Panc1 (cell line): ENCODE measurements at regions of chr2 and their contacts with region 1.

Region 1: DNA sequence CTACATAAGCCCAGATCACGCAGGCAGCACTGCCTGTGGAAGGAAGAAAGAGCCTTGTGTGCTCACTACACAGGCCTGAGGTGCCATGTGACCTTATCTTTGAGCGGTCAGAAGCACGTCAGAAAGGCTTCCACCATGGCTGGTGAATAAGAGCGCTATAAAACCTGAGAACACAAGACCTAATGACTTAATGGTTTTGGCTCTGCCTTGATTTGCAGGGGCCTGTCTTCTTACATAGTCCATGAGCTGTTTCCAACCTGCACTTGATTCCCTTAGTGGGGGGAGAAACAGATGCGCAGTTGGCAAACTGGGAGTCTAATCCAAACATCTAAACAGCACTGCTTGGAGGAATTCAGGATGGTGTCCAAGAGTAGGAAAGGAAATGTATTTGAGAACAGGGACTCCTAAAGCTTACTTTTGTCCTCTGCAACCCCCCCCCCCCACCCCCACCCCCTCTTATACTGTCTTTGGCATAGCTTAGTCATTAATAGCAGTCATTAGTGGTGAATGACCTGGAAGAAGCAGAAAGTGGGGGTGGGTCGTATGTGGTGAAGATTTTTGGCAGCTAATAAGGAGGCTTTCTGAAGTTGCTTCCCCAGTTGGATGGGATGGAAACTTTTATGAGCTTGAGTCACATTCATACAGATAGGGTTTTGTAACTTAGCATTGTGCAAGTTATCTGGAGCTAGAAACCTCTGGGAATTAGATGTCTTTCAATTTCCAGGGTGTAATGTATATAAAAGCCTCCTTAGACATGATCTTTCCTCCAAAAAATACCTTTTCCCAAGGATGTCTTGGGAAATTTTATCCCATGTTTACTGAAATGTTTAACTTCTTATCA is 454.1 kb downstream of the MEIS1 start:
- DNase-seq: no peak
- ATAC-seq: no peak
- H3K4me3 ChIP-seq: no peak overlapping the region
- H3K27ac ChIP-seq: no peak overlapping the region
- H3K4me1 ChIP-seq: no peaks in the 10 kb centered on the region
- H3K27me3 ChIP-seq: no peaks in the 10 kb centered on the region
- CTCF ChIP-seq: no peak

Region 2: DNA sequence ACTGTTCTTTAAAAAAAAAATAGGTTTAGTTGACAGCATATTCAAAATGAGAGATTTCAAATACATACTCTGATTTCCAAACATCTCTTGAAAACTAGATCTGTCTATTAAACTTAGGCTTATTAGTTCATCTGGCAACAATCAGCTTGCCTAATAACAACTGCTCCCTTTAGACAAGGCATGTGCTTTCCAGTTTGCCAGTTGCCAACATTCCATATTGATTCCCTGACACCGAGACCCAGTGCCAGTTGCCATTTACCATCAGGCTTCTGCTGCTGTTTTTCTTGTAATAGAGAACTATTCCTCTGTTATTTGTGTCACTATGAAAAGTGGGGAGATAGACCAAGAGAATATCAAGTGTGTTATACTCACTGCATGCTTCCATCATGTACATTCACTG is 917.8 kb after region 1 on chr2:
- CTCF ChIA-PET with region 1: interaction called, 10 read pairs
- POLR2A ChIA-PET with region 1: no interaction called
- in situ Hi-C with region 1: no loop called
- intact Hi-C with region 1: no loop called
- DNase-seq: no peak
- ATAC-seq: no peak
- H3K4me3 ChIP-seq: no peak overlapping the region
- H3K27ac ChIP-seq: no peak overlapping the region
- H3K4me1 ChIP-seq: no peaks in the 10 kb centered on the region
- H3K27me3 ChIP-seq: no peaks in the 10 kb centered on the region
- CTCF ChIP-seq: no peak